ENCODE measurements at regions of chr2 and their contacts with region 1.

Region 1: DNA sequence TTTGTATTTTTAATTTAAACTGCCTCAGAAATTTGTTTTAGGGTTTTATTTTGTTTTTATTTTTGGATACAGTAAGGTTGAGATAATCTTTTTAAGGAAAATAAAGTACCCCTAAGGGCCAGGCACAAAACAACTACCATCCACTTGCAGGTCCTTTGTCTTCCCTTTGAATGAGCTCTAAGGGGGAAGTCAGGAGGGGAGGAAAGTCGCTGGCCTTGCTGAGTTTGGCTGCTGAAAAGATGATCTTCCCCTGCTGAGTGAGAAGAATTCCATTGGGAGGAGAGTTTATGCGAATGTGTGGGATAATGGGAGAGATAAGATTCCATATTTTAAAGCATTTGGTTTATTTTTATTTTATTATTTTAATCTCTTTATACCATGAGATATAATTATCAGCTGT is 100.7 kb downstream of the ARHGAP15 start:
- DNase-seq: no peak
- ATAC-seq: no peak
- H3K4me3 ChIP-seq: no peak overlapping the region
- H3K4me3 Mint-ChIP-seq: no peak overlapping the region
- H3K27ac ChIP-seq: no peak overlapping the region
- H3K27ac Mint-ChIP-seq: no peak overlapping the region
- H3K4me1 ChIP-seq: no peaks in the 10 kb centered on the region
- H3K4me1 Mint-ChIP-seq: peaks cover 13% of the 10 kb centered on the region
- H3K27me3 ChIP-seq: no peaks in the 10 kb centered on the region
- H3K27me3 Mint-ChIP-seq: no peaks in the 10 kb centered on the region
- CTCF ChIP-seq: no peak

Region 2: DNA sequence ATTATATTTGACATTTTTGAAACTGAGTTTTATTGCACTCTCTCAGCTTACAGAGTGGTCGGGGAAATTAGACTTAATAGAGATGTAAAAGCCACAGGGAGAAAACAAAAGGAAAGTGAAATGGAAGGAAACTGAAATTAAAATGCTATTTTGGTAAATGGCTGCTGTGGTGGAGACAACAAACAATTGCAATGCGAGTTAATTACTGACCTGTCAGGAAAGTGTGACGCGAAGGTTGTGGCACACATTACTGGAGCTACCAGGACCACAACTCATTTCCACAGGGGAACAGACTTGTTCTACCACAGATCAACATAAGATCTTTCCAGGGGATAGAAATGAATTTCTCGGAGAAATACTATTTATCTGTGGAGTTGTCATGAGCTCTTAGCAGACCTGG is 81.2 kb before region 1 on chr2:
- CTCF ChIA-PET with region 1: no interaction called
- POLR2A ChIA-PET with region 1: no interaction called
- intact Hi-C with region 1: no loop called
- DNase-seq: no peak
- ATAC-seq: no peak
- H3K4me3 ChIP-seq: peak overlapping the region in 1 of 5 experiments; percentile 22
- H3K4me3 Mint-ChIP-seq: peak overlapping the region; percentile 61
- H3K27ac ChIP-seq: peak overlapping the region in 1 of 2 donors; percentile 78
- H3K27ac Mint-ChIP-seq: peak overlapping the region; percentile 88
- H3K4me1 ChIP-seq: peaks cover 72 to 85% of the 10 kb centered on the region in 2 donors
- H3K4me1 Mint-ChIP-seq: peaks cover 85% of the 10 kb centered on the region
- H3K27me3 ChIP-seq: no peaks in the 10 kb centered on the region
- H3K27me3 Mint-ChIP-seq: no peaks in the 10 kb centered on the region
- CTCF ChIP-seq: no peak

Region 3: GRCh38 chr2:143246815-143247744 is 17.1 kb after region 1 on chr2:
- CTCF ChIA-PET with region 1: no interaction called
- POLR2A ChIA-PET with region 1: no interaction called
- intact Hi-C with region 1: loop called (anchors 2 kb)
- DNase-seq: no peak
- ATAC-seq: no peak
- H3K4me3 ChIP-seq: no peak overlapping the region
- H3K4me3 Mint-ChIP-seq: peak overlapping the region; percentile 23
- H3K27ac ChIP-seq: peak overlapping the region in 1 of 2 donors; percentile 31
- H3K27ac Mint-ChIP-seq: peak overlapping the region; percentile 75
- H3K4me1 ChIP-seq: peaks cover 19 to 42% of the 10 kb centered on the region in 2 donors
- H3K4me1 Mint-ChIP-seq: peaks cover 17% of the 10 kb centered on the region
- H3K27me3 ChIP-seq: no peaks in the 10 kb centered on the region
- H3K27me3 Mint-ChIP-seq: no peaks in the 10 kb centered on the region
- CTCF ChIP-seq: no peak